B cell (primary cell): ENCODE measurements at regions of chr20 and their contacts with region 1.

Region 1: GRCh38 chr20:37007898-37008649 is 56.6 kb upstream of the SAMHD1 start:
- DNase-seq: peak; percentile 51
- ATAC-seq: peak; percentile 36
- H3K4me3 ChIP-seq: no peak overlapping the region
- H3K4me3 Mint-ChIP-seq: peak overlapping the region; percentile 70
- H3K27ac ChIP-seq: peak overlapping the region; percentile 35 to 57
- H3K27ac Mint-ChIP-seq: peak overlapping the region; percentile 59
- H3K4me1 ChIP-seq: peaks cover 46 to 55% of the 10 kb centered on the region in 2 donors
- H3K4me1 Mint-ChIP-seq: peaks cover 38% of the 10 kb centered on the region
- H3K27me3 ChIP-seq: no peaks in the 10 kb centered on the region
- H3K27me3 Mint-ChIP-seq: no peaks in the 10 kb centered on the region
- CTCF ChIP-seq: peak; percentile 24

Region 2: GRCh38 chr20:37042986-37043972 is 35.2 kb after region 1 on chr20:
- CTCF ChIA-PET with region 1: interaction called, 5 read pairs
- POLR2A ChIA-PET with region 1: interaction called, 11 read pairs
- intact Hi-C with region 1: loop called (anchors 1 kb)
- DNase-seq: peak; percentile 67
- ATAC-seq: peak; percentile 53
- H3K4me3 ChIP-seq: peak overlapping the region; percentile 24 to 67 (median 44)
- H3K4me3 Mint-ChIP-seq: peak overlapping the region; percentile 85
- H3K27ac ChIP-seq: peak overlapping the region; percentile 76 to 89
- H3K27ac Mint-ChIP-seq: peak overlapping the region; percentile 89
- H3K4me1 ChIP-seq: peaks cover 23 to 28% of the 10 kb centered on the region in 2 donors
- H3K4me1 Mint-ChIP-seq: peaks cover 25% of the 10 kb centered on the region
- H3K27me3 ChIP-seq: no peaks in the 10 kb centered on the region
- H3K27me3 Mint-ChIP-seq: no peaks in the 10 kb centered on the region
- CTCF ChIP-seq: no peak

Region 3: GRCh38 chr20:37081717-37082289 is 73.7 kb after region 1 on chr20:
- CTCF ChIA-PET with region 1: interaction called, 23 read pairs
- POLR2A ChIA-PET with region 1: no interaction called
- intact Hi-C with region 1: loop called (anchors 2 kb)
- DNase-seq: peak; percentile 20
- ATAC-seq: no peak
- H3K4me3 ChIP-seq: no peak overlapping the region
- H3K4me3 Mint-ChIP-seq: no peak overlapping the region
- H3K27ac ChIP-seq: no peak overlapping the region
- H3K27ac Mint-ChIP-seq: no peak overlapping the region
- H3K4me1 ChIP-seq: no peaks in the 10 kb centered on the region
- H3K4me1 Mint-ChIP-seq: peaks cover 5% of the 10 kb centered on the region
- H3K27me3 ChIP-seq: no peaks in the 10 kb centered on the region
- H3K27me3 Mint-ChIP-seq: no peaks in the 10 kb centered on the region
- CTCF ChIP-seq: peak; percentile 26

Region 4: GRCh38 chr20:37095599-37096414 is 87.7 kb after region 1 on chr20 and contains the start of gene RBL1:
- CTCF ChIA-PET with region 1: interaction called, 3 read pairs
- POLR2A ChIA-PET with region 1: interaction called, 4 read pairs
- intact Hi-C with region 1: loop called (anchors 2 kb)
- DNase-seq: peak; percentile 96
- ATAC-seq: peak; percentile 86
- H3K4me3 ChIP-seq: peak within 1 kb of the TSS; percentile 62 to 77 (median 73)
- H3K4me3 Mint-ChIP-seq: peak within 1 kb of the TSS; percentile 98
- H3K27ac ChIP-seq: peak within 1 kb of the TSS; percentile 88 to 95
- H3K27ac Mint-ChIP-seq: peak within 1 kb of the TSS; percentile 100
- H3K4me1 ChIP-seq: peaks cover 13 to 28% of the 10 kb centered on the region in 2 donors
- H3K4me1 Mint-ChIP-seq: peaks cover 29% of the 10 kb centered on the region
- H3K27me3 ChIP-seq: no peaks in the 10 kb centered on the region
- H3K27me3 Mint-ChIP-seq: no peaks in the 10 kb centered on the region
- CTCF ChIP-seq: peak; percentile 13
- total RNA-seq, gene RBL1: 25.5 and 27.8 TPM in 2 replicates